HCT116 (cell line): ENCODE measurements at regions of chr21 and their contacts with region 1.

Region 1: DNA sequence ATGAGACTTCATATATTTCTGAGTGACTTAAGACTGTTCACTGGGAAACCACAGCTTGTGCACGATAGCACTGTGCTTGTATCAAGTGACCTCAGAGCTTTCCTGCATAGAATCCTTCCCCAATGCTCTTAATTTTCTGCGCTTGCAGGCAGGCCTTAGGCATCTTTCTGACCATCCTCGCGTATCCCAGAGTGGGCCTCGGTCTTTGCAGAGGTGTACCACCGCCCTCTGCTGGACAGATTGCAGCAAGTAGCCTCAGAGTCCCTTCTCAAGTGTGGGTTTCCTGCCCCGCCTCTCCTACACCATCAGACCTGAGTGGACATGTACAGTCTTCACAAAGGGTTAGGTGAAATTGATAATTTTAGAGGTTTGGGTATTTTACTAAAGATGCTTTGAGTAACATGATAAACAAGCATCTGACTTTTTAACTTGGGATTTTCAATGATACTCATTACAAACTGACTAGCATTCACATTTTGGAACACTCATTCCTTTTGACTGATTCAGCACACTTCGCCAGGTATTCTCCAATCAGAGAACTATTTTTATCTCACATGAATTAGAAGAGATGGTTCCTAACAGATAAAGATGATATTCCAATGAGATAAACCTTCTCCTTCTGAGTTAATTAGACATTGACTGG is 246.5 kb upstream of the USP25 start:
- DNase-seq: peak; percentile 74
- ATAC-seq: peak; percentile 100
- H3K4me3 ChIP-seq: no peak overlapping the region
- H3K27ac ChIP-seq: no peak overlapping the region
- H3K4me1 ChIP-seq: no peaks in the 10 kb centered on the region; a peak in 1 of 4 replicates
- H3K27me3 ChIP-seq: no peaks in the 10 kb centered on the region
- CTCF ChIP-seq: peak; percentile 28 to 78 (median 76); a peak in 5 of 6 replicates
- POLR2A ChIP-seq: no peak
- RAD21 ChIP-seq: peak; percentile 69

Region 2: GRCh38 chr21:14864211-14865021 is 618.8 kb before region 1 on chr21:
- CTCF ChIA-PET with region 1: interaction called, 6 read pairs
- POLR2A ChIA-PET with region 1: no interaction called
- RAD21 ChIA-PET with region 1: no interaction called
- intact Hi-C with region 1: loop called (anchors 1 kb)
- DNase-seq: no peak
- ATAC-seq: peak; percentile 93
- H3K4me3 ChIP-seq: no peak overlapping the region
- H3K27ac ChIP-seq: peak overlapping the region; percentile 41
- H3K4me1 ChIP-seq: peaks cover 10 to 19% of the 10 kb centered on the region in 2 experiments; a peak in 2 of 4 replicates
- H3K27me3 ChIP-seq: no peaks in the 10 kb centered on the region
- CTCF ChIP-seq: peak; percentile 14 to 67 (median 62); a peak in 4 of 6 replicates
- POLR2A ChIP-seq: no peak
- RAD21 ChIP-seq: peak; percentile 63

Region 3: DNA sequence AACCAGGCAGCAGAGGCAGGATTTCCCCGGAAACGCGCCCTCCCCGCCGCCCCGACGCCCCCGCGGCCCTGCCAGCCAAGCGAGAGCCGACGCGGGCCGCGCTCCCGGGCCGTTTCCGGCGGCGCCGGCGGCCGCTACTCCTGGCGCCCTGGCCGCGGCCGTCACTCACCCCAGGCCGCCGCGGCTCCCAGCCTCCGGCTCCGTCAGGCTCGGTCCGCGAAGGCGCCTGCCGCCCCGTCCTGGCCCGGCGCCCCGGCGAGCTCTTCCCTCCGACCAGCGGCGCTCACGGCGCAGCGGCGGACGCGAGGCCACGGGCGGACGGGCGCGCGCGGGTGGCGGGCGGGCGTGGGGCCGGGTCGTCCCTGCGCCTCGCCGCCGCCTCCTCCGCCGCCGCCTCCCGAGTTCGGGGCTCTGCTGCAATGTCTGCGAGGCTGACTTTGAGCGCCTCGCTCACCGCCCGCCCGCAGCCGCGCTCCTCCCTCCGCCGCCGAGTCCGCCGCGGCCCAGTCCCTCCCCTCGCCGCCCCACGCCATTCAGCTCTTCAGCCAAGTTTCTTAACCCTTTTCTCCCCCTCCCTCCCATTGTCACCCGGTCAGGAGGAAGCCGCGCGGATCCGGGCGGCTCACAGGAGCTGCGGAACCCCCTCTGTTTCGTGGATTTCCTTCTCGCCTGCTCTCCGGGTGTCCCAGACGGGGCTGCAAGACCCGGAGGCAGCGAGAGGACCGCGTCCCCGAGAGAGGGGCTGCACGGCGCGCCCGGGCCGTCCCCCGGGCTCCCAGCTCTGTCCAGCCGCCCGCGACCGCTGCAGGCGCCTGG is 418.5 kb before region 1 on chr21 and contains the start of gene NRIP1:
- CTCF ChIA-PET with region 1: interaction called, 4 read pairs
- POLR2A ChIA-PET with region 1: no interaction called
- RAD21 ChIA-PET with region 1: no interaction called
- intact Hi-C with region 1: loop called (anchors 5 kb)
- DNase-seq: no peak
- ATAC-seq: peak; percentile 74
- H3K4me3 ChIP-seq: peak within 1 kb of the TSS; percentile 53 to 59
- H3K27ac ChIP-seq: peak within 1 kb of the TSS; percentile 95
- H3K4me1 ChIP-seq: peaks cover 17 to 42% of the 10 kb centered on the region in 2 experiments
- H3K27me3 ChIP-seq: no peaks in the 10 kb centered on the region
- CTCF ChIP-seq: no peak
- POLR2A ChIP-seq: no peak
- RAD21 ChIP-seq: no peak
- total RNA-seq, gene NRIP1: 29.6 TPM